ENCODE measurements at regions of chr5 and their contacts with region 1.

Region 1: GRCh38 chr5:164175083-164175482 is 669.7 kb downstream of the MAT2B start:
- DNase-seq: no peak

Region 2: GRCh38 chr5:163706053-163706771 is 468.9 kb before region 1 on chr5:
- intact Hi-C with region 1: loop called in 1 of 2 experiments (anchors 2 kb)
- DNase-seq: no peak

Measured in posterior vena cava (tissue), 2 donors.